ENCODE measurements at regions of chr11 and their contacts with region 1.

Region 1: DNA sequence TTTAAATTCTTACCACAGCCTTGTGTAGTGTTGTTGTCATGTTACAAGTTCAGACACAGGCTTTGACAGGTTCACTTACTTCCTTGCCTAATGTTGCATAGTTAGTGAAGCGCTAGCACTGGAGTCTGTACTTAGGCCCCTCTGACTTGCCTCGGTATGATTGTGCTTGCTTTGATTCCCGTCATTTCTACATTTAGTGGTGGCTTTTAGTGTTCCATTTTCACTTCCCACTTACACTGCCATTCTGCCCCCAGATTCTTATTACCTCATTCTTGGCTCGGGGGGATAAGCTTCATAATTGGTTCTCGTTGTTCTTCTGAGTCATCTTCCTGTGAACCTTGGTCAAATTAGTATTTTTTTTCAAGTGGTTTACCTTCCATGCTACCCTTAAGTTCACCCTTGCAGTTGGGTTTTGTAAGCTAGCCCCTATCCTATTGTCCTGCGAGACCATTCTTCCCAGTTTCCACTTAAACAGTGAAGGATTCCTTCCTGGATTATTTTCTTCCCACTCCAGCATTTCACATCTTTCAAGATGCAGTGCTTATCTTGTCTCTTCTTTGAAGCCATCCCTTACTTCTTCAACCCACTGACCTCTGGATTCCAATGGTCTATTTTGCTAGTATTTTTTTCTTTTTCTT is 68.7 kb downstream of the DDX10 start:
- DNase-seq: no peak
- H3K4me3 Mint-ChIP-seq: no peak overlapping the region
- H3K27ac Mint-ChIP-seq: peak overlapping the region; percentile 6
- H3K4me1 Mint-ChIP-seq: peaks cover 19% of the 10 kb centered on the region
- H3K27me3 Mint-ChIP-seq: no peaks in the 10 kb centered on the region

Region 2: DNA sequence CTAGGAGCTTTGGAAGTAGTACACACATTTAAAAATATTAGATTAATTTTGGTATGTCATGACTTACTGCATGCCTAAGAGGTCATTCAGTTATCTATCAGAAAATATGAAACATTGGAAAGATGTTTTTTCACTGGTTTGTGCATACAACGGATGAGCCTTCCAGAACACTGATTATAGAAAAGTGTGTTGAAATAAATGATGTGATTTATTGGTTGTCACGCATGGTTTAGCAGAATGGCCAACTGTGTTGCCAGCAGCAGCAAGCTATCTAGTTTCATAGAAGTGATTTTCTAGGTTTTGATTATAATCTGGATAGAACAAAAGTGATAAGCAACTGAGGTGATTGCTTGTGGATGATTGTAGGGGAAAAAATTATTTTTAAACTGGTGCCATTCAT is 15.1 kb before region 1 on chr11:
- CTCF ChIA-PET with region 1: interaction called, 10 read pairs
- DNase-seq: no peak
- H3K4me3 Mint-ChIP-seq: no peak overlapping the region
- H3K27ac Mint-ChIP-seq: no peak overlapping the region
- H3K4me1 Mint-ChIP-seq: no peaks in the 10 kb centered on the region
- H3K27me3 Mint-ChIP-seq: no peaks in the 10 kb centered on the region